ENCODE measurements at regions of chr11 and their contacts with region 1.

Region 1: GRCh38 chr11:80155412-80156017 is 714.7 kb upstream of the TENM4 start:
- DNase-seq: peak; percentile 7
- CTCF ChIP-seq: peak; percentile 24

Region 2: GRCh38 chr11:79708300-79708932 is 447.1 kb before region 1 on chr11:
- in situ Hi-C with region 1: loop called (anchors 25 kb)
- DNase-seq: peak; percentile 34
- CTCF ChIP-seq: peak; percentile 65

Region 3: GRCh38 chr11:80309301-80309700 is 153.8 kb after region 1 on chr11:
- in situ Hi-C with region 1: no loop called
- DNase-seq: no peak
- CTCF ChIP-seq: no peak